HEK293 (cell line): ENCODE measurements at regions of chr3 and their contacts with region 1.

Region 1: DNA sequence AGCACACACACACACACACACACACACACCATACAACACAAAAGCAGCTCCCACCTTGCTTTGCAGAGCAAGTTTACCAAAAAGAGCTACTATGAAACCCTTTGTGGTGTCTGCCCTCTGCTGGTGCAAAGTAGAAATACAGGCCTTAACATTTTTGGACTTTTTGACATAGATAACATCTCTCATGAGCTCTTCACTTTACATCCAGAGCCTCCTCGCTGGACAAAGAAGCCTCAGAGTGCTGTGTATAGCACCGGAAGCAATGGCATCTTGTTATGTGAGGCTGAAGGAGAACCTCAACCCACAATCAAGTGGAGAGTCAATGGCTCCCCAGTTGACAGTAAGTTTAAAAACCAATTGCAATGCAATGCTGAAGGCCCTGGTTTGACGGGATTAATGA is 157.9 kb downstream of the CHL1 start:
- H3K4me3 ChIP-seq: no peak overlapping the region
- H3K27ac ChIP-seq: no peak overlapping the region
- H3K4me1 ChIP-seq: no peaks in the 10 kb centered on the region
- CTCF ChIP-seq: peak; percentile 47; the same call in 1 of the 2 replicates

Region 2: DNA sequence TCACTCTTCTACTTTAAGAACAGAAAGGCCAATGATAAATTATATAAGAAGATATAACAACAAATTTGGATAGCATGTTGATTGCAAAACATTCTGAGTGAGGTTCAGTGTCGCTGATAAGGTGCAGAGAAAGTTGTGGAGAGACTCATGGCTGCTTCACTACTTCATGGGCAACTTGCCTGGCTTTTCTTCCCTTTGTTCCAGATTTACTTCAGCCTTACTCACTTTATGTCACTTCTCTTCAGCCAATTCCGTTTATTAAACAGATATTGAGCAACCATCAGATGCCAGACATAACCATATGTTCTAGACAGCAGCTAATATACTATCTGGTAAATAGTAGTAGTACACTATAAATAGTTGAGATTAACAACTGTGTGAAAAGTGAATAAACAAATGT is 307.9 kb before region 1 on chr3:
- CTCF ChIA-PET with region 1: interaction called, 114 read pairs
- POLR2A ChIA-PET with region 1: no interaction called
- H3K4me3 ChIP-seq: no peak overlapping the region
- H3K27ac ChIP-seq: no peak overlapping the region
- H3K4me1 ChIP-seq: no peaks in the 10 kb centered on the region
- CTCF ChIP-seq: no peak

Region 3: GRCh38 chr3:280691-281090 is 73.7 kb before region 1 on chr3:
- CTCF ChIA-PET with region 1: no interaction called
- POLR2A ChIA-PET with region 1: no interaction called
- H3K4me3 ChIP-seq: no peak overlapping the region
- H3K27ac ChIP-seq: no peak overlapping the region
- H3K4me1 ChIP-seq: no peaks in the 10 kb centered on the region
- CTCF ChIP-seq: no peak

Region 4: DNA sequence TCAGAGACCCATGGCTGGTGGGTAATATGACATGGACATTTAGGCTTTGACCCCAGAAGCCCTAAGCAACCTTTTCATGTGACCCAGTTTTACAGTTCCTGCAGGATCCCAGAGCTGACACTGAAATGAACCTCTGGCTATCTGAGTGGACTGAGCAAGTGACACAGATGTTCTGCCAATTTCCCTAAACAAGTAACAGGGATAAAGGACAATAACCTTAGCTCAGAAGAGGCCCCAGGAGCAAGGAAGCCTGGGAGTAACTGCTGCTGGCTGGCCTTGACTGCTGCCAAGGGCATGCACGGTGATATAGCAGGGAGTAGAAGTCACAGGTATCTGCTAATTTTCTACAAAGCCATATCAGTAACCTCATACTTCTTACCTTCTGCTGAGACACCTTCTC is 20.0 kb after region 1 on chr3:
- CTCF ChIA-PET with region 1: interaction called, 15 read pairs
- POLR2A ChIA-PET with region 1: no interaction called
- H3K4me3 ChIP-seq: no peak overlapping the region
- H3K27ac ChIP-seq: no peak overlapping the region
- H3K4me1 ChIP-seq: no peaks in the 10 kb centered on the region
- CTCF ChIP-seq: no peak

Region 5: DNA sequence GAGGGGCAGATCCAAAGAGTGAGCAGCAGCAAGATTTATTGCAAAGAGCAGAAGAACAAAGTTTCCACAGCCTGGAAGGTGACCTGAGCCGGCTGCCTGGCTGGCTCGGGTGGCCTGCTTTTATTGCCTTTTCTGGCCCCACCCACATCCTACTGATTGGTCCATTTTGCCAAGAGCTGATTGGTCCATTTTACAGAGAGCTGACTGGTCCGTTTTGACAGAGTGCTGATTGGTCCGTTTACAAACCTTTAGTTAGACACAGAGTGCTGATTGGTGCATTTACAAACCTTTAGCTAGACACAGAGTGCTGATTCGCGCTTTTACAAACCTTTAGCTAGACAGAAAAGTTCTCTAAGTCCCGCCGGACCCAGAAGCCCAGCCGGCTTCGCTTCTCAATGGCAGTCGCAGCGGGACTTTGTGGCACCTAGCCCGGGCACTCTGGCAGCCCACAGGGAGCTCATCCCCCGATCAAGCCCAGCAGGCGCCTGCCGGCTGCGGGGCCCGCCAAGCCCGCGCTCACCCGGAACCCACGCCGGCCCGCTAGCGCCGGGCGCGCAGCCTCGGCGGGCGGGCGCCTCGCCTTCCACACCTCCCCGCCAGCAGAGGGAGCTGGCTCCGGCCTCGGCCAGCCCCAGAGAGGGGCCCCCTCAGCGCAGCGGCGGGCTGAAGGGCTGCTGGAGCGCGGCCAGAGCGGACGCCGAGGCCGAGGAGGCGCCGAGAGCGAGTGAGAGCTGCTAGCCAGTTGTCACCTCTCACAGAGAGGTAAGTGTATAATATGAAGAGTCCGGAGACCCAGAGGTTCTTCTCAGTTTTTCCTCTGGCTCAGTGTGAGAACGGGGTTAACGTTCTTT is 181.4 kb after region 1 on chr3:
- CTCF ChIA-PET with region 1: no interaction called
- POLR2A ChIA-PET with region 1: no interaction called
- H3K4me3 ChIP-seq: peak overlapping the region; percentile 42
- H3K27ac ChIP-seq: no peak overlapping the region
- H3K4me1 ChIP-seq: no peaks in the 10 kb centered on the region
- CTCF ChIP-seq: no peak

Region 6: DNA sequence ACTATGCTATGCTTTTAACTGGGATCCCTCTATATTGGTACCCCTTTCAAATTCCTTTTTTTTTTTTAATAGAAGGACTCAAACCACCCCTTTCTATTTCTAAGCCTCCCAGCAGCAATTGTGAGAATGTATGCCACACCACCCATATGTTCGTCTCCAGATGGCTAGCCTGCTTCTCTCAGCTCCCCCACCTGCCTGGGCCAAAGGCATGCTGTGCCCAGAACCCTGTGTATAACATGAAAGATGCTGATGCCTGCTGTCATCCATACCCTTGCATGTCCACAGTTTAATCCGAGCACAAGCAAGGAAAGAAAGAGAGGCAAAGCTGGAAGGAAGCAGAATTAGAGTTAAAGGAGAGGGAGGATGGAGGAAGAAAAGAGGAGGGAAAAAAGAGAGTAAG is 578.9 kb after region 1 on chr3:
- CTCF ChIA-PET with region 1: no interaction called
- POLR2A ChIA-PET with region 1: no interaction called
- H3K4me3 ChIP-seq: no peak overlapping the region
- H3K27ac ChIP-seq: no peak overlapping the region
- H3K4me1 ChIP-seq: no peaks in the 10 kb centered on the region
- CTCF ChIP-seq: no peak